ENCODE measurements at regions of chr11 and their contacts with region 1.

Region 1: GRCh38 chr11:13680501-13681264 is 12.2 kb downstream of the FAR1 start:
- DNase-seq: peak; percentile 12
- H3K4me3 ChIP-seq: no peak overlapping the region
- H3K27ac ChIP-seq: no peak overlapping the region
- H3K4me1 ChIP-seq: peaks cover 4% of the 10 kb centered on the region
- CTCF ChIP-seq: no peak

Region 2: DNA sequence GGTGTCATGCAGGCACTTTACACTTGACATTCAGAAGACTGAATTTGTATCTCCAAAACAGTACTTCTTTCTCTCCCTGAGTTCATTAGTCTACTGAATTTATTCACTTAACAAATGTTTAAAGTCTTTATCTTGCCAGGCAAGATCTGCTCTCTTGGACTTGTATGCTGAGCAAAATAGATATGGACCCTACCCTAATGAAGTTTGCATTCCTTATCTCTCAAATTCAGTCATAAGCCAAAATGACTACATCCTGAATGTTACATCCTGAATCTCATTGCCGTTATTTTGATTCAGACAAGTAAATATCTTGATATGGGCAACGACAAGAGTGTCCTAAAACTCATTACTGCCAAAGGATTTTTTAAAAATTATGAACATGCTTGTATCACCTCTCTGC is 17.4 kb after region 1 on chr11:
- CTCF ChIA-PET with region 1: no interaction called
- POLR2A ChIA-PET with region 1: interaction called, 6 read pairs
- intact Hi-C with region 1: loop called (anchors 2 kb)
- DNase-seq: no peak
- H3K4me3 ChIP-seq: no peak overlapping the region
- H3K27ac ChIP-seq: no peak overlapping the region
- H3K4me1 ChIP-seq: no peaks in the 10 kb centered on the region
- CTCF ChIP-seq: no peak

Region 3: GRCh38 chr11:13717331-13717730 is 36.6 kb after region 1 on chr11:
- CTCF ChIA-PET with region 1: no interaction called
- POLR2A ChIA-PET with region 1: no interaction called
- intact Hi-C with region 1: no loop called
- DNase-seq: no peak
- H3K4me3 ChIP-seq: no peak overlapping the region
- H3K27ac ChIP-seq: no peak overlapping the region
- H3K4me1 ChIP-seq: no peaks in the 10 kb centered on the region
- CTCF ChIP-seq: no peak

Measured in OCI-LY7 (cell line).